Posterior cingulate gyrus (tissue), 11 donors: ENCODE measurements at regions of chr3 and their contacts with region 1.

Region 1: DNA sequence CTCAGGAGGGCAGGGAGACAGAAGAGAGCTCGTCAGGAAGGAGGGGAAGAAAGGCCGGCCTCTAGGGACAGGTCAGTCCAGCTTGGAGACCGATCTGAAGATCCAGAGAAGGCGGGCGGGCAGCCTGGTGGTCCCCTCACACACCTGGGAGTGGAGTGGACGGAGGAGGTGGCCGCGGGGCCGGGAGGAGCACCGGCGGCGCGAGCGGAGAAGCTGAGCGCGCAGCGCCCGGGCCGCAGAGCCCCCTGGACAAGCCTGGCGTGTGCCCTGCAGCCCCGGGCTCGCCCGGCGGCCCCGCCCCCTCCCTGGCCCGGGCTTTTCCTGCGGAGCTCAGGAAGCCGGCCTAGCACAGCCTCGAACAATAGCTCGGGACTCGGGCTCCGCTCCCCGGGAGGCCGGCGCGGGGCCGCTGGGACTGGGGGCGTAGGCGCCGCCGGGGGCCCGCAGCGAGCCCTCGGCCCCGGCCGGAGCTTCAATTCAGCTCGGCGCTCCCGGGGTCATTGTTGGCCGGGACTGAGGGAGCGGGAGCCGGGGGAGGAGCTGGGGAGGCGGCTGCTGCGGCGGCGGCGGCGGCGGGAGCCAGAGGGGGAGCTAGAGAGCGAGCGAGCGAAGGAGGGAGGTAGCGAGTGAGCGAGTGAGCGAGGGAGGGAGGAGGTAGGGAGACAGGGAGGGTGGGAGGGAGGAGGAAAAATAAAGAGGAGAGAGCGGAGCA is 40.9 kb upstream of the ROPN1 start:
- DNase-seq: peak; percentile 76 to 97 (median 84)

Region 2: DNA sequence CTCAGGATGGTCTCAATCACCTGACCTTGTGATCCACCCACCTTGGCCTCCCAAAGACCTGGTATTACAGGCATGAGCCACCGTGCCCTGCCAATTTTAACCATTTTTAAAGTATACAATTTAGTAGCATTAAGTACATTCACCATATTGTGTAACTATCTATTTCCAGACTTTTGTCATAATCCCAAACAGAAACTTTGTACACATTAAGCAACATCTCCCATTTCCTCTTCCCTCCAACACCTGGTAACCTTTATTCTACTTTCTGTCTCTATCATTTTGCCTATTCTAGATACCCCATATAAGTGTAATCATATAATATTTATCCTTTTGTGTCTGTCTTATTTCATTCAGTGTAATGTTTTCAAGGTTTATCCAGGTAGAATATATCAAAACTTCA is 139.8 kb before region 1 on chr3:
- intact Hi-C with region 1: no loop called
- DNase-seq: no peak

Region 3: DNA sequence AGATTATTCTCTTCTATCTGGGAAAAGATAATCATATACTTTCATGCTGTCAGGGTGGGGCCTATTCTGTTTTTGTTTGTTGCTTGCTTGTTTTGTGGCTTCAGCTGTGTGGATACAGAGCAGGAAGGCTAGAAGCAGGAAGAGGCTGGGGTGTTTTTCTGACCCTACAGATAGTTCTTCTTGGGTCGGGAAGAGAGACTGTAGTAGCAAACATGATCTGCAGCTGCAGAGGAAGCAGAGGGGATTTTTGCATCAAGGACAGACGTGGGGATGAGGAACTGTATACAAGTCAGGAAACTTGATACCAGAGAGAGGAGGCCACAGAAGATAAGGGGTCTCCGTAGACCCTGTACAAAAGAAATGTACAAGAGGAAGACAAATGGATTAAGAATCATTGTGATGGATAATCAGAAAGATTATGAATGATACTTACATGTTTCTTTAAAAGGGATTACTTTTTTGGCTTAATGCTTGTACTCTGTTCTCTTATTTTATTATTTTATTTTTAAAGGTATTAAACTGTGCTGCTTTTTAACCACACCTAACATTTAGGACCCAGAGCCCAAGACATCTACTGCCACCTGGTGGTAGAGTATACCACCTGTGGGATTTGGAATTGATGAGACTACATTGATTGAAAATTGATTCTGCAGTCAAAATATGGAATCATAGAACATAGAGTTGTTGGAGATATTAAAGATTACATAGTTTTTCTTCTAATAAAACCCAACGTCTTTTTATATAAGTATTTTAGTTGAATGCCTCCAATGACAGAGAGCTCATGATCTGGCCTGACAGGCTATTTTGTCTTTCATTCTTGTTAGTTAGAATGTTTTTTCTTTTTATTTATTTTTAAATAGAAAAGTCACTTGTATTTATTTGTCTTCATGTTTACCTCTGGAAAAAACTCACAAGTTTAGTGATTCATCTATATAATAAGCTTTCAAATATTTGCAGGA is 46.4 kb after region 1 on chr3:
- intact Hi-C with region 1: loop called (anchors 5 kb)
- DNase-seq: peak in 1 of 10 donors; percentile 34

Region 4: GRCh38 chr3:124149771-124150170 is 117.0 kb after region 1 on chr3:
- intact Hi-C with region 1: no loop called
- DNase-seq: no peak

Region 5: DNA sequence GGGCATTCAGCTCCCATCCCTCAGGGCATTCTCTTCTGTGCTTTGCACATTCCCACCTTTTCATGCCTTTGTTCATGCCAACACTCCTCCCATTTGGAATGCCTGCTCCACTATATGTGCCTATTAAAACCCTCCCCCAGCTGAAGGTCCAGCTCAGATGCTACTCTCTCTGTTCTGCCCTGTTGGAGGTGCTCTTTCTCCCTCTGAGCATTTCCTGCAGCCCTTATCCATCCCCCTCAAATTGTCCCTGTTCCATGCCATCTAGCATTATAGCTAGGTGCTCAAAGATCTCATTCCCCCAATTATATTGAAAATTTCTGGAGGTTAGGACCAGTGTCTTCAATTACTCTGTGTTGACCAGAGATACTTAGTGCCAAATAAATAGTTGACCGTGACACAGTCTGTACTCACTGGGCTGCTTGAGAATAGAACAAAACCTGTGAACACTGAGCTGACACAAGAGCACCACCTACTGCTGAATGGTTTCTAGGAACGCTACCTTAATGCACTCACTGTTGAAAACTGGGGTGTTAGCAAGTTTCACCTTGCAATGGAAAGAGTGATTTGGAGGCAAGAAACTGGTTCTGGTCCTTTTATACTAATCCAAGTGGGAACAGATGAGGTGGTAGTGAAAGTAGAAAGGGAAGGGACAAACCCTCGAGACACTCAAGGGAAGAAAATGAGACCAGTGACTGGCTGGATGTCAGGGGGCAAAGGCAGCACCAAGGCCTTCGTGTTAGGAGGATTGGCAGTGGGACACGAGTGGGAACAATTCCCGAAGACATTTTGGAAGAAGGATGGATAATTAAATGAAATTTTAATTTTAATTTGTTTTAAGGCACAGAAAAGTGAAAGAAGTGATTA is 248.9 kb after region 1 on chr3:
- intact Hi-C with region 1: loop called (anchors 5 kb)
- DNase-seq: no peak